Right ventricle myocardium superior (tissue), 1 donor: ENCODE measurements at regions of chr2 and their contacts with region 1.

Region 1: GRCh38 chr2:64052468-64053241 is 33.4 kb upstream of the VPS54 start:
- DNase-seq: no peak
- ATAC-seq: no peak

Region 2: DNA sequence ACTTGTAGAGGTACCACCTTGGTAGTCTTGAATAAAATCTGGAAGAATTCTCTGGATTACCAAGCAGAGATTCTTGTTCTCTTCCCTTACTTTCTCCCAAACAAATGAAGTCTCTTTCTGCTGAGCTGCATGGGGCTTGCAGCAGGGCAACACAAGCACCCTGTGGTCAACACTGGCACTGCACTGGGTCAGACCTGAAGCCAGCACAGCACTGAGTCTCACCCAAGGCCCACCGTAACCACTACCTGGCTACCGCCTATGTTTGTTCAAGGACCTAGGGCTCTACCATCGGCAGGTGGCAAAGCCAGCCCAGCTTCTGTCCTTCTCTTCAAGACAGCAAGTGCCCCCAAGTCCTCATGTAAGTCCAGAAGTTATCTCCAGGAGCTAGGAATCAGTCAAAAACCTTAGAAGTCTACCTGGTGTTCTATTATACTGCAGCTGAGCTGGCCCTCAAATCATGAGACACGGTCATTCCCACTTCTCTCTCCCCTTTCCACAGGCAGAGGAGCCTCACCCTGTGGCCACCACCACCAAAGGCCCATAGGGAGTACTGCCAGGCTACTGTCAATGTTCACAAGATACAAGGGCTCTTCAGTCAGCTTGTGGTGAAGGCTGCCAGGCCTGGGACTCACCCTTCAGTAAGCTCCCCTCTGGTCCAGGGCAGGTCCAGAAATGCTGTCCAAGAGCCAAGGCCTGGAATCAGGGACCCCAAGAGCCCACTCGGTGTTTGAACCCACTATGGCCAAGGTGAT is 51.8 kb before region 1 on chr2:
- intact Hi-C with region 1: no loop called
- DNase-seq: no peak
- ATAC-seq: peak; percentile 47

Region 3: DNA sequence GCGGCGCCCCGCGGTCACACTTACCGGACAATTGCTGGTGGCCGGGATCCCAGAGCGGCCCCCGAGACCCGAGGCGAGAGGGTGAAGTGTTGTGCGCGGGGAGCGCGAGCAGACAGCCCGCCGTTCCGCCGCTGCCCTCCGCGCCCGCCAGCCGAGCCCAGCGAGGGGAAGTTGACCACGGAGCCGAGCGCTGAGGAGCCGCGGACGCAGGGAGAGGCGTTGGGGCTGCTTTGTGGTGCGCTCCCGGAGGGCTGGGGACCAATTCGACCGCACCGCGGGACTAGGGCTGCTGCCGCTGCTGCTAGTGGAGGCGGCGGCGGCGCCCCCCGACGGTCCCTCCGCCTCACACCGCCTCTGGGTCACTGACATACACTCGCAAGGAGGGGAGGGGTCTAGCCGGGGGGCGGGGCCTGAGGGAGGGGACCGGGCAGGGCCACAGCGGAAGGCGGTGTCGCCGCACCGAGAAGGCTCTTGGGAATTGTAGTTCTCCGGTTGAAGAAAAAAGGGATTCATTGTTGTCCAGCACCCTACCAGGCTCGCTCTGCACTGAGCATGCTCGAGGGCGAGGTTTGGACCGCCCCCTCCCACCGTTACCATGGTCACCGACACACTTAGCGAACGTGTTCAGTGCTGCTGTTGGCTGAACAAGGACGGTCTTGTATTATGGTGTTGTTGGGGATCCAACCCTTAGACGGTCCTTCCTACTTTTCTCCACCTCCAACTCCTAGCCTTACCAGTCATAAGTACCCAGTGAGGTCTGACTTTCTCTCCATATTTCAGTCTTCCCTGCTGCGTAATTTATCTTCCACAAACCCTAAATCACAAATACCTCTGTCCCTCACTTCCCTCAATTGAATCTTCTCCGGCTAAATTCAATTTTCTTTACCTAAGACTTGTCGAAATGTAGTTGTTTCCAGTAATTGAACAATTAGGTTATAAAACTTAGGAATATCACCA is 91.7 kb after region 1 on chr2 and contains the start of gene PELI1:
- intact Hi-C with region 1: loop called (anchors 10 kb)
- DNase-seq: peak; percentile 95
- ATAC-seq: peak; percentile 99
- total RNA-seq, gene PELI1: 9.1 TPM

Region 4: GRCh38 chr2:64311948-64312621 is 259.4 kb after region 1 on chr2:
- intact Hi-C with region 1: loop called (anchors 5 kb)
- DNase-seq: peak; percentile 84
- ATAC-seq: peak; percentile 95

Region 5: GRCh38 chr2:64653349-64654062 is 600.9 kb after region 1 on chr2 and contains the start of gene SERTAD2:
- intact Hi-C with region 1: no loop called
- DNase-seq: peak; percentile 95
- ATAC-seq: peak; percentile 89
- total RNA-seq, gene SERTAD2: 12.8 TPM